Left ventricle myocardium superior (tissue), 1 donor: ENCODE measurements at regions of chr22 and their contacts with region 1.

Region 1: DNA sequence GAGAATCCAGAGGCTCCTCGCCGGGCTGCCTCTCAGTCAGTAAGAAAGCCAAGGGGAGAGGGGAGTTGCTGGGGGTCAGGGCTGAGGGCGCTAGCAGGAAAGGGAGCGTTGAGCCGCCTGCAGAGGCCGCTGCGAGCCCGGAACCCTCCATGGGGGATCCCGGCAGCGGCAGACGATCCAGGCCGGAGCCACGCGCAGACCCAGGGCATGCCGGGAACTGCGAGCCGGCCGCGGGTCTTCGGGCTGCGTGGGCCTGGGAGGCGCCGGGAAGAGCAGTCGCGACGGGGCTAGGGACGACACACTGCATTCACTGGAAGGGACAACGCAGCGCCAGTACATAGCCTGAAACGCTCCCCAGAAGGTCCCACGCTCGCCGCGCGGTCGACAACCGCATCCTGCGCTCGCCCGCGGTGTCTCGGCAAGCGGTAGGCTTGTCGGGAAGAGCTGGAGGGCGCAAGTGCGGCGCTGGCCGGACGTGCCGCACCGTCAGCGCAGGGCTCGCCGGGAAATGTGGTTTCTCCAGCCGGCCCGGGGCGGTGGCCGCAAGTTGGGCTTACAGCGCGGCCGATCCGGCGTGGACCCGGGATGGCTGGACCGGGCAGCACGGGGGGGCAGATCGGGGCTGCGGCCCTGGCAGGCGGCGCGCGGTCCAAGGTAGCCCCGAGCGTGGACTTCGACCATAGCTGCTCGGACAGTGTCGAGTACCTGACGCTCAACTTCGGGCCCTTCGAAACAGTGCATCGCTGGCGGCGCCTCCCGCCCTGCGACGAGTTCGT is at the start of gene LZTR1:
- DNase-seq: peak; percentile 90
- ATAC-seq: peak; percentile 96
- total RNA-seq, gene LZTR1: 24.4 TPM

Region 2: GRCh38 chr22:20867179-20868024 is 114.6 kb before region 1 on chr22:
- intact Hi-C with region 1: no loop called
- DNase-seq: peak; percentile 41
- ATAC-seq: peak; percentile 86

Region 3: GRCh38 chr22:20916983-20917810 is 64.8 kb before region 1 on chr22 and contains the start of gene CRKL:
- intact Hi-C with region 1: loop called (anchors 10 kb)
- DNase-seq: peak; percentile 98
- ATAC-seq: peak; percentile 99
- total RNA-seq, gene CRKL: 54.7 TPM